ENCODE measurements at regions of chr2 and their contacts with region 1.

Region 1: DNA sequence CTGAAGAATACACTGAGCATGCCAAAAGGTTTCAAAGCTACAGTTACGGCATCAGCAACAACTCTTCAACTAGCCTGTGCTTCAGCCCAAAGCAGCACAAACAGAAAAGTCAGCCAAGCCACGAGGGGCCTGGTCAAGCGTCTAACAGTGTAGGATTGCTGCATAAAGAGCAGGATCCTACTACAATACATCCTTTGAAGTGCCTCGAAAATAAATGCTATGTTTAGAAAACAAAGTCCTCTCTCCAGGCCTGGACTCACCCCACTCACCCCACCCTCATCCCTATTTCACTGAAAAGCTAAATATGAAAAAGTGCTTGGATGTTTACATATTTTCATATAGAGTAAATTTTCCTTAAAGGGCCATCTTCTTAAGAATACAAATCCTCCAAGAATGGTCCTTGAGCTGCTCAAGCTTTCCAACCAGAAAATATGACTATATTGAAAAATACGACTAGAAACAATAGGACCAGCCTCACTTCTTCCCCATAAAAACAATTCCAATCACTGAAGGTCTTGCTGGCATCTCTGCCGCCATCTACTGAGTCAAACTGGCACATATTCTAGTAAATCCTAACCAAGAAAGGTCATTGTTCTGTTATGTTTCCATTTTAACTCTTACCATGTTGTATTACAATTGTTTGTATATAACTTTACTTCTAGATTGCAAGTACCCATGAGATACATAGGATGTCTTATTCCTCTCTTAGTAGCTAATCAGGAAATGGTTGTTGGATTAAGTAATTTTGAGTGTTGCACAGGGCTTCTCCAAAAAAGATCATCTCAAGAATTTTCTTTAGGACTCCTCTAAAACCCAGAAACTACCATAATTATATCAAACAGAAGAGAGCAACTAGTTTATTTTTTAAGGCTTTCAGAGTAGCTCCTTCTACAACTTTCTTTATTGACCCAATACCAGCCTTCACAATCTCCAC is 63.6 kb downstream of the CLHC1 start:
- DNase-seq: peak; percentile 45 to 63
- H3K4me3 ChIP-seq: no peak overlapping the region
- H3K4me1 ChIP-seq: peaks cover 7% of the 10 kb centered on the region
- H3K27me3 ChIP-seq: no peaks in the 10 kb centered on the region

Region 2: GRCh38 chr2:55014962-55015939 is 153.2 kb before region 1 on chr2:
- in situ Hi-C with region 1: loop called (anchors 5 kb)
- DNase-seq: peak; percentile 66 to 69
- H3K4me3 ChIP-seq: no peak overlapping the region
- H3K4me1 ChIP-seq: peaks cover 59% of the 10 kb centered on the region
- H3K27me3 ChIP-seq: no peaks in the 10 kb centered on the region